ENCODE measurements at regions of chr13 and their contacts with region 1.

Region 1: DNA sequence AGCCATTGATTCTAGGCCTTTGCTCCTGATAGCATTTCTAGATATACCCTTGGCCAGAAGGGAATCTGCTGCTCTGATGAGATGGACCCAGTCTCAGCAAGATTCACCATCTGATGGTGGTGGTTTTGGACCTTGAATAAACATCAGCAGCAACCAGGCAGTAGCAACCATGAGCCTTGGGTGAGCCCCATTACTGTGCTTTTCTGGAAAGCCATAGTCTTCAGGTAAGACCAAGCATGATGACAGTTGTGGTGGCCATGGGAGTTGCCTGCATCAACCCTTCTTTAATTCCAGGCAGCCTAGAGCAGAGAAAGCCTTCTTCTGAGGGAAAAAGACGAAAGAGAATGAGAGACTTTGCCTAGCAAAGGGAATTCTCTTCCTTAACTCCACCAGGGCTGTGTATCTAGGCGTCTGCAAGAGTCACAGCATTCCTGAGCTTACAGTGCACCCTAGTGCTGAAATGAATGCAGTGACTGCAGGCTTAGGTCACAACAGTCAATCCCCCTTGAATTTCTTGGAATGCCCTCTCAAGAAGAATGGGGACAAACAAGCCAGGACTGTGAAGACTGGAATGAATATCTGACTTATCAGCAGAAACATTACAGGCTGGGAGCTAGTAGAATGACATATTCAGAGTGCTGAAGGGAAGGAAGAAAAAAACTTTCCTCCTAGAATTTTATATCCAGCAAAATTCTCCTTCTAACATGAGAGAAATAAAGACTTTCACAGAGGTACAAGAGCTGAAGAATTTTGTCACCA is 942.4 kb upstream of the PCDH20 start:
- DNase-seq: peak; percentile 62
- ATAC-seq: peak; percentile 98
- H3K4me3 ChIP-seq: no peak overlapping the region
- H3K27ac ChIP-seq: no peak overlapping the region
- H3K4me1 ChIP-seq: no peaks in the 10 kb centered on the region
- H3K27me3 ChIP-seq: no peaks in the 10 kb centered on the region
- CTCF ChIP-seq: peak; percentile 70

Region 2: GRCh38 chr13:62014299-62014698 is 343.8 kb before region 1 on chr13:
- CTCF ChIA-PET with region 1: no interaction called
- POLR2A ChIA-PET with region 1: no interaction called
- intact Hi-C with region 1: loop called (anchors 1 kb)
- DNase-seq: peak; percentile 54
- ATAC-seq: peak; percentile 53; the same call in 1 of the 2 replicates
- H3K4me3 ChIP-seq: peak overlapping the region; percentile 46; the same call in 1 of the 2 replicates
- H3K27ac ChIP-seq: no peak overlapping the region
- H3K4me1 ChIP-seq: no peaks in the 10 kb centered on the region
- H3K27me3 ChIP-seq: no peaks in the 10 kb centered on the region
- CTCF ChIP-seq: peak; percentile 49

Region 3: DNA sequence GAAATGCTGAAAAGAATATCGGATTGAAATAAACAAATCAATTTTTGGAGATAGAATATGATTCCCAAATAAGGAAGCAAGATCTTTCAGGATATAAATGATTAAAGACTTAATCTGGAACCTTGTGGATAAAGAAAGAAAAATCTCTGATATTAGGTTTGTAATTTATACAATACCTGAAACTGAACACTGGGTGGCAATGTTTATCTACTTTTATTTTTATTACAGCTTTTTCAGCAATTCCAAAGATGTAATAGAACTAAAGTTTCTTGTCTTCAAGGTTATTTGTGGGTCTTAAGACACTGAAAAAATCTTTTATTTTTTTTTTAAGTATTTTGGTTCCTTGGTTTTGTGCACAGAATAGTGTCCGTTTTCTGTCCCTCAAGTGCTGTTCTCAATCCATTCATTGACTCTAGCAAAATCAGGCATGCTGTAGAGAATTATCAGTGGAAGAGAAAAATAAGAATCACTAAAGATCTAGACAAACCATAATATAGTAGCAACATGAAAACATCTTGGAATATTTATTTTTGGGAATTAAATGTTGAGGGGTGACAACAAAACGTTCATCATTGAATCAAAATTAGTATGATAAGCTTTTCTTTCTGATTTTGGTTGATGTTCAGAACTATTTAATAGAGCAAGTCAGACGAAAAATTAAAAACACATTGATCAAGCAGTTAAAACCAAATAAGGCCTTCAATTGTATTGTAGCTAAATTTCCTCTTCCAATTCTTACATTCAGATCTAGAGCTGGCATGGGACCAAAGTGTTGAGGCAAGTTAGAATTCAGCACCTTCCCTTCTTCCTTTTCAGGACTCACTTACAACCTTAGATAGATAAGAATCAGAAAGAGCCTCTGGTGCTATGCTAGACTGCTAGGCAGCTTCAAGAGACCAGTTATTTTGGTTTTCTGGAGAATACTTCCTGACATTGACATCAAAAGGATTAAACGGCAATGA is 238.0 kb before region 1 on chr13:
- CTCF ChIA-PET with region 1: interaction called, 6 read pairs
- POLR2A ChIA-PET with region 1: no interaction called
- intact Hi-C with region 1: loop called (anchors 1 kb)
- DNase-seq: peak; percentile 31
- ATAC-seq: no peak
- H3K4me3 ChIP-seq: no peak overlapping the region
- H3K27ac ChIP-seq: no peak overlapping the region
- H3K4me1 ChIP-seq: no peaks in the 10 kb centered on the region
- H3K27me3 ChIP-seq: no peaks in the 10 kb centered on the region
- CTCF ChIP-seq: peak; percentile 53; the same call in 1 of the 2 replicates

Region 4: GRCh38 chr13:62320129-62321108 is 37.6 kb before region 1 on chr13:
- CTCF ChIA-PET with region 1: no interaction called
- POLR2A ChIA-PET with region 1: no interaction called
- intact Hi-C with region 1: loop called (anchors 1 kb)
- DNase-seq: peak; percentile 49
- ATAC-seq: no peak
- H3K4me3 ChIP-seq: no peak overlapping the region
- H3K27ac ChIP-seq: no peak overlapping the region
- H3K4me1 ChIP-seq: no peaks in the 10 kb centered on the region
- H3K27me3 ChIP-seq: no peaks in the 10 kb centered on the region
- CTCF ChIP-seq: peak; percentile 60; the same call in 1 of the 2 replicates

Region 5: GRCh38 chr13:62375653-62376052 is 17.6 kb after region 1 on chr13:
- CTCF ChIA-PET with region 1: no interaction called
- POLR2A ChIA-PET with region 1: no interaction called
- intact Hi-C with region 1: no loop called
- DNase-seq: no peak
- ATAC-seq: no peak
- H3K4me3 ChIP-seq: no peak overlapping the region
- H3K27ac ChIP-seq: no peak overlapping the region
- H3K4me1 ChIP-seq: no peaks in the 10 kb centered on the region
- H3K27me3 ChIP-seq: no peaks in the 10 kb centered on the region
- CTCF ChIP-seq: no peak

Region 6: GRCh38 chr13:62418872-62419271 is 60.8 kb after region 1 on chr13:
- CTCF ChIA-PET with region 1: no interaction called
- POLR2A ChIA-PET with region 1: no interaction called
- intact Hi-C with region 1: no loop called
- DNase-seq: peak; percentile 3
- ATAC-seq: no peak
- H3K4me3 ChIP-seq: no peak overlapping the region
- H3K27ac ChIP-seq: no peak overlapping the region
- H3K4me1 ChIP-seq: no peaks in the 10 kb centered on the region
- H3K27me3 ChIP-seq: no peaks in the 10 kb centered on the region
- CTCF ChIP-seq: no peak